ENCODE measurements at regions of chr22 and their contacts with region 1.

Region 1: DNA sequence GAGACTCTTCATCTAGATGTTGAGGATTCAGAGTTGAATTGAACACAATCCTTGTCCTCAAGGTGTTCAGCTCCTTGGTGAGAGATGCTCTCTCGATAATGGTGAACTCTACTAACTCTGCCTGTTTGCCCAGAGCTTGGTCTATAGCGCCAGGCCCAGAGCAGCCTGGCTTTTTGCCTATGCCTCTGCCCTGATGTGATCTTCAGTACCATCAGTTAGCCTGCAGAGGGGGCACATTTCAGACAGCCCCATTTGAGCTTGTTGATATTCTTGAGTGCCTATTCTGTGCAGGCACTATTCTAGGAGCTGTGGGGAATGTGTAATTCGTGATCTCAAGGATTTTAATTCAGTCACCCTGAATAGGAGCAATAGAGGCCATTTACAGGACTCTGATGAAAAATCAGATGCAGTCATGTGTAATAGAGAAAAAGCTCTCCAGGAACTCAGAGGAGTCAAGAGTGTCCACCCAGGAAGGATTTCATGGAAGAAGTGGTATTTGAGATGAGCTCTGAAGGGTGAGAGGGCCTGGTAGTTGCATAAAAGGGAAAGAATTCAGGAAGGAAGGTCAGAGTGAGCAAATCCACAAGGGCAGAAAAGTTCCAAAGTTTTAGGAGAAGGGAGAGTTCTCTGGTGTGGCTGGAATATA is 19.3 kb downstream of the GTPBP1 start:
- DNase-seq: peak; percentile 58
- H3K4me3 Mint-ChIP-seq: no peak overlapping the region
- H3K27ac Mint-ChIP-seq: peak overlapping the region; percentile 73
- H3K4me1 Mint-ChIP-seq: peaks cover 5% of the 10 kb centered on the region
- H3K27me3 Mint-ChIP-seq: no peaks in the 10 kb centered on the region

Region 2: GRCh38 chr22:38735465-38736256 is 10.6 kb after region 1 on chr22:
- CTCF ChIA-PET with region 1: interaction called, 14 read pairs
- DNase-seq: no peak
- H3K4me3 Mint-ChIP-seq: no peak overlapping the region
- H3K27ac Mint-ChIP-seq: peak overlapping the region; percentile 84
- H3K4me1 Mint-ChIP-seq: peaks cover 51% of the 10 kb centered on the region
- H3K27me3 Mint-ChIP-seq: peaks cover 10% of the 10 kb centered on the region

Region 3: GRCh38 chr22:38751422-38752346 is 26.6 kb after region 1 on chr22:
- CTCF ChIA-PET with region 1: interaction called, 12 read pairs
- DNase-seq: peak; percentile 91
- H3K4me3 Mint-ChIP-seq: peak overlapping the region; percentile 89
- H3K27ac Mint-ChIP-seq: peak overlapping the region; percentile 100
- H3K4me1 Mint-ChIP-seq: peaks cover 63% of the 10 kb centered on the region
- H3K27me3 Mint-ChIP-seq: no peaks in the 10 kb centered on the region